ENCODE measurements at regions of chr1 and their contacts with region 1.

Region 1: GRCh38 chr1:116962987-116963639 is 38.4 kb upstream of the CD101 start:
- DNase-seq: no peak
- ATAC-seq: no peak
- H3K4me3 ChIP-seq: no peak overlapping the region
- H3K27ac ChIP-seq: no peak overlapping the region
- H3K4me1 ChIP-seq: peaks cover 9% of the 10 kb centered on the region
- H3K27me3 ChIP-seq: no peaks in the 10 kb centered on the region; a peak in 1 of 5 replicates
- CTCF ChIP-seq: no peak
- EP300 ChIP-seq: no peak
- POLR2A ChIP-seq: no peak
- RAD21 ChIP-seq: no peak

Region 2: DNA sequence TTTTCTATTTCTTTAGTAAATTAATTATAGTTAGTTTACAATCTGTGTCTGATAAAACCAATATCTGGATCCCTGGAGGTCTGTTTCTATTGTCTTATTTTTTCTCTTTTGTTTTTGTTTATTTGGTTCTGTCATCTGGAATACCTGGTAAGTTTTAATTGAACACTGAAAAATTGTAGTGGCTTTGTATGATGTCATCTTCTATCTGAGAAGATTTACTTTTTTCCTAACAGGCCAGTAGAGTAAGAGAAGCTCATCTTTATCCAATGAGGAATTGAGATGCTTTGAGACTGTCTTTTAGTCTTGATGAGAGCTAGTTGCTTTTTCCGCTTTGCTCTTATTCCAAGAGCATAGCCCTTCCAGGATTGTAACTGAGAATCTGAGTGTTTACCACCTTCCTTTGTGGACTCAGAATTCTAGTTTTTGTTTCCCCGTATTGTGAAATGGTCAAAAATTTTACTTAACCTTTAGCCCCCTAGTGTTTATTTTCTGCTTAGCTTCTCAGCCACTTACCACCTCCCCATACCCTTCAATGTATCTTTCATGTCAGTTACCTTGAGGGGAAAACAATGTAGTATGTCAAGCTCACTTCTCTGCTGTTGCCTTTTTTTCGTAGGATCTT is 28.4 kb before region 1 on chr1:
- CTCF ChIA-PET with region 1: no interaction called
- POLR2A ChIA-PET with region 1: no interaction called
- in situ Hi-C with region 1: no loop called
- intact Hi-C with region 1: loop called (anchors 1 kb)
- DNase-seq: peak; percentile 58
- ATAC-seq: peak; percentile 88
- H3K4me3 ChIP-seq: no peak overlapping the region
- H3K27ac ChIP-seq: no peak overlapping the region
- H3K4me1 ChIP-seq: peaks cover 12% of the 10 kb centered on the region
- H3K27me3 ChIP-seq: no peaks in the 10 kb centered on the region
- CTCF ChIP-seq: peak; percentile 42
- EP300 ChIP-seq: no peak
- POLR2A ChIP-seq: no peak
- RAD21 ChIP-seq: no peak

Measured in HepG2 (cell line).